ENCODE measurements at regions of chr1 and their contacts with region 1.

Region 1: GRCh38 chr1:10430216-10431069 is at the start of gene CENPS:
- DNase-seq: peak; percentile 96
- ATAC-seq: peak; percentile 84
- H3K4me3 ChIP-seq: peak within 1 kb of the TSS; percentile 42 to 98 (median 89)
- H3K4me3 Mint-ChIP-seq: peak within 1 kb of the TSS; percentile 96
- H3K27ac ChIP-seq: peak within 1 kb of the TSS; percentile 82 to 95
- H3K27ac Mint-ChIP-seq: peak within 1 kb of the TSS; percentile 99
- H3K4me1 ChIP-seq: peaks cover 11 to 30% of the 10 kb centered on the region in 2 donors
- H3K4me1 Mint-ChIP-seq: peaks cover 30% of the 10 kb centered on the region
- H3K27me3 ChIP-seq: no peaks in the 10 kb centered on the region
- H3K27me3 Mint-ChIP-seq: no peaks in the 10 kb centered on the region
- CTCF ChIP-seq: peak; percentile 97
- total RNA-seq, gene CENPS: 7.2 and 10.9 TPM in 2 replicates

Region 2: GRCh38 chr1:10378081-10378841 is 52.2 kb before region 1 on chr1:
- CTCF ChIA-PET with region 1: interaction called, 25 read pairs
- POLR2A ChIA-PET with region 1: no interaction called
- intact Hi-C with region 1: no loop called
- DNase-seq: no peak
- ATAC-seq: no peak
- H3K4me3 ChIP-seq: no peak overlapping the region
- H3K4me3 Mint-ChIP-seq: no peak overlapping the region
- H3K27ac ChIP-seq: no peak overlapping the region
- H3K27ac Mint-ChIP-seq: no peak overlapping the region
- H3K4me1 ChIP-seq: no peaks in the 10 kb centered on the region
- H3K4me1 Mint-ChIP-seq: no peaks in the 10 kb centered on the region
- H3K27me3 ChIP-seq: no peaks in the 10 kb centered on the region
- H3K27me3 Mint-ChIP-seq: no peaks in the 10 kb centered on the region
- CTCF ChIP-seq: no peak

Region 3: GRCh38 chr1:10472220-10473144 is 42.0 kb after region 1 on chr1 and contains the start of gene DFFA:
- CTCF ChIA-PET with region 1: interaction called, 6 read pairs
- POLR2A ChIA-PET with region 1: interaction called, 5 read pairs
- intact Hi-C with region 1: loop called (anchors 1 kb)
- DNase-seq: peak; percentile 94
- ATAC-seq: peak; percentile 81
- H3K4me3 ChIP-seq: peak within 1 kb of the TSS; percentile 58 to 84 (median 80)
- H3K4me3 Mint-ChIP-seq: peak within 1 kb of the TSS; percentile 87
- H3K27ac ChIP-seq: peak within 1 kb of the TSS; percentile 38 to 74
- H3K27ac Mint-ChIP-seq: peak within 1 kb of the TSS; percentile 88
- H3K4me1 ChIP-seq: peaks cover 34 to 44% of the 10 kb centered on the region in 2 donors
- H3K4me1 Mint-ChIP-seq: peaks cover 46% of the 10 kb centered on the region
- H3K27me3 ChIP-seq: no peaks in the 10 kb centered on the region
- H3K27me3 Mint-ChIP-seq: no peaks in the 10 kb centered on the region
- CTCF ChIP-seq: no peak
- total RNA-seq, gene DFFA: 28.2 and 30.7 TPM in 2 replicates

Measured in B cell (primary cell).